Adrenal gland (tissue), 19 donors: ENCODE measurements at regions of chr1 and their contacts with region 1.

Region 1: DNA sequence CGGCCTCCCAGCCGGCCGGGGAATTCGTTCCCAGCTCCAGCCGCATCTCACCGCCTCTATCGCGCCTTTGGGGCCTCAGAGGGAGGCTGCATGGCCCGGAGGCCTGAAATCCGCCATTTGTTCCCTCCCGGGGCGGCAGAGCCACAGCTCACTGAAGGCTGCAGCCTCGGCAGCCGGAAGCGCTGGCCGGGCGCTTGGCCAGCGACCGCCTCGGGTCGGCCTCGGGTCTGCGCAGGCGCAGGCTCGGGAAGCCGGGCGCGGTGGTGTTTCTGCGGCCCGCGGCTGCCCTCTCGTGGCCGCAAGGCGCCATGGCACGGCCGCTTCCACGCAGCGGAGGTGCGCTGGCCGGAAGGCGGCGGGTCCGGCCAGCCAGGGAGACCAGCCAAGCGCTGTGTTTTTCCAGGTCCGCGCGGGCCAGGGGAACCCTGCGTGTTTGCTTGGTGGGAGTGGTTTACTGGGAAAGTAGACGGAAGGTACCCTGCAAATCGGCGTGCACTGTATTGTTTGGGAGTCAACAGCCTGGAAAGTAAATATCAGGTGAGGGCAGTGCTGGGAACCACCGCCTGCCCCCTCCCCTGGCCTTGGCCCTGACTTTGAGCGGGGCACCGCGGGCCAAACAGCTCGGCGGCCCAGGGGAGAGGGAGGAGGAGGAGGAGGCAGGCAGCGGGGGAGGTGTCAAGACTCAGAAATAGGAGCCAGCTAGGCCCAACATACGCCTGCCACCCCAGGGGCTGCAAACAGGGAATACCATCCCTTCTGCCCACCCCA is 52.7 kb upstream of the CD34 start:
- DNase-seq: peak; percentile 90 to 96 (median 94)
- H3K4me3 ChIP-seq: peak overlapping the region in 2 of 4 donors; percentile 25 to 48
- H3K27ac ChIP-seq: peak overlapping the region; percentile 55 to 92 (median 89)
- H3K4me1 ChIP-seq: peaks cover 15 to 53% of the 10 kb centered on the region in 2 donors
- H3K27me3 ChIP-seq: no peaks in the 10 kb centered on the region
- CTCF ChIP-seq: peak; percentile 67 to 100 (median 97)
- POLR2A ChIP-seq: peak; percentile 88 to 91

Region 2: GRCh38 chr1:207885129-207886032 is 78.2 kb before region 1 on chr1:
- intact Hi-C with region 1: loop called (anchors 5 kb)
- DNase-seq: peak; percentile 75 to 96 (median 91)
- H3K4me3 ChIP-seq: no peak overlapping the region
- H3K27ac ChIP-seq: peak overlapping the region in 2 of 5 donors; percentile 27 to 39
- H3K4me1 ChIP-seq: peaks cover 21 to 33% of the 10 kb centered on the region in 2 donors
- H3K27me3 ChIP-seq: no peaks in the 10 kb centered on the region
- CTCF ChIP-seq: peak; percentile 95 to 98 (median 98)
- POLR2A ChIP-seq: no peak

Region 3: GRCh38 chr1:207908107-207908734 is 55.4 kb before region 1 on chr1:
- intact Hi-C with region 1: no loop called
- DNase-seq: peak in 1 of 7 donors; percentile 52
- H3K4me3 ChIP-seq: no peak overlapping the region
- H3K27ac ChIP-seq: peak overlapping the region in 2 of 5 donors; percentile 28 to 73
- H3K4me1 ChIP-seq: no peaks in the 10 kb centered on the region
- H3K27me3 ChIP-seq: no peaks in the 10 kb centered on the region
- CTCF ChIP-seq: no peak
- POLR2A ChIP-seq: no peak